WTC11 (cell line): ENCODE measurements at regions of chr3 and their contacts with region 1.

Region 1: DNA sequence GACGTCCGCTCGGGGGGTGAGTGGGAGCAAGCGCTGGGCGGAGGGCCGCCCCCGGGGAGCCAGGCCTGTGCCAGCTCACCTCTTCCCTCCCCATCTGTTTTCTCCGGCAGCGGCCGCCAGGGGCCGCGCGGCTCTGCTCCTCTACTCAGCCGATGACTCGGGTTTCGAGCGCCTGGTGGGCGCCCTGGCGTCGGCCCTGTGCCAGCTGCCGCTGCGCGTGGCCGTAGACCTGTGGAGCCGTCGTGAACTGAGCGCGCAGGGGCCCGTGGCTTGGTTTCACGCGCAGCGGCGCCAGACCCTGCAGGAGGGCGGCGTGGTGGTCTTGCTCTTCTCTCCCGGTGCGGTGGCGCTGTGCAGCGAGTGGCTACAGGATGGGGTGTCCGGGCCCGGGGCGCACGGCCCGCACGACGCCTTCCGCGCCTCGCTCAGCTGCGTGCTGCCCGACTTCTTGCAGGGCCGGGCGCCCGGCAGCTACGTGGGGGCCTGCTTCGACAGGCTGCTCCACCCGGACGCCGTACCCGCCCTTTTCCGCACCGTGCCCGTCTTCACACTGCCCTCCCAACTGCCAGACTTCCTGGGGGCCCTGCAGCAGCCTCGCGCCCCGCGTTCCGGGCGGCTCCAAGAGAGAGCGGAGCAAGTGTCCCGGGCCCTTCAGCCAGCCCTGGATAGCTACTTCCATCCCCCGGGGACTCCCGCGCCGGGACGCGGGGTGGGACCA is 632 bp upstream of the CRELD1 start:
- DNase-seq: peak; percentile 88
- ATAC-seq: peak; percentile 71
- H3K4me3 Mint-ChIP-seq: peak overlapping the region; percentile 93
- H3K27ac Mint-ChIP-seq: peak overlapping the region; percentile 53; the same call in 1 of the 2 replicates
- H3K4me1 Mint-ChIP-seq: peaks cover 14% of the 10 kb centered on the region
- H3K27me3 Mint-ChIP-seq: peaks cover 10% of the 10 kb centered on the region
- CTCF ChIP-seq: peak; percentile 33

Region 2: GRCh38 chr3:9525078-9525477 is 407.9 kb before region 1 on chr3:
- CTCF ChIA-PET with region 1: no interaction called
- POLR2A ChIA-PET with region 1: no interaction called
- DNase-seq: no peak
- ATAC-seq: no peak
- H3K4me3 Mint-ChIP-seq: no peak overlapping the region
- H3K27ac Mint-ChIP-seq: no peak overlapping the region
- H3K4me1 Mint-ChIP-seq: no peaks in the 10 kb centered on the region
- H3K27me3 Mint-ChIP-seq: peaks cover 22% of the 10 kb centered on the region
- CTCF ChIP-seq: no peak

Region 3: DNA sequence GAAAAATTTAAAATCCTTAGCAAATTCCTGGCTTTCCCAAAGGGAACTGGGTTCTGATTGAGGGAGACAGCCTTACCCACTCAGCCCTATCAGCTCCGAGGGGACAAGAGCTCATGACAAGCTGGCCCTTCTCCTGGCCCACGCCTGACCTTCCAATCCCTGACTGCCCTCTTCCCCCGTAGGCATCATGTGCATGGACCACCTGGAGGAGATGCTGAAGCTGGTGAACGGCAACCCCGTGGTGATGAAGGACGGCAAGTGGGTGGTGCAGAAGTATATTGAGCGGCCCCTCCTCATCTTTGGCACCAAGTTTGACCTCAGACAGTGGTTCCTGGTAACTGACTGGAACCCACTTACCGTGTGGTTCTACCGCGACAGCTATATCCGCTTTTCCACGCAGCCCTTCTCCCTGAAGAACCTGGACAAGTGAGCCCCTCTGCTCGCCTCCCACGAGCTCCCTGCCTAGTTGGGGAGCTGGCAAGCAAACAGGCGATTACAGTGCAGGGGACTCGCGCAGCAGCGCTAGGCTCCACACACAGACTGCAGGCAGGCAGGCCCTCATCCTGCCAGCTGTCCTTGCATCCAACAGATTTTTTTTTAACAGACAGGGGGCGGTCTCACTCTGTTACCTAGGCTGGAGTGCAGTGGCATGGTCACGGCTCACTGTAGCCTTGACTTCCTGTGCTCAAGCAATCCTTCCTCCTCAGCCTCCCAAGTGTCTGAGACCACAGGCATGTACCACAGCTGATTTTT is 106.0 kb before region 1 on chr3:
- CTCF ChIA-PET with region 1: interaction called, 16 read pairs
- POLR2A ChIA-PET with region 1: no interaction called
- DNase-seq: peak; percentile 45
- ATAC-seq: peak; percentile 92
- H3K4me3 Mint-ChIP-seq: no peak overlapping the region
- H3K27ac Mint-ChIP-seq: no peak overlapping the region
- H3K4me1 Mint-ChIP-seq: peaks cover 8% of the 10 kb centered on the region
- H3K27me3 Mint-ChIP-seq: no peaks in the 10 kb centered on the region
- CTCF ChIP-seq: peak; percentile 69

Region 4: GRCh38 chr3:9915254-9916141 is 17.5 kb before region 1 on chr3:
- CTCF ChIA-PET with region 1: interaction called, 17 read pairs
- POLR2A ChIA-PET with region 1: interaction called, 16 read pairs
- DNase-seq: peak; percentile 68
- ATAC-seq: peak; percentile 20
- H3K4me3 Mint-ChIP-seq: peak overlapping the region; percentile 73
- H3K27ac Mint-ChIP-seq: no peak overlapping the region
- H3K4me1 Mint-ChIP-seq: peaks cover 18% of the 10 kb centered on the region
- H3K27me3 Mint-ChIP-seq: peaks cover 3% of the 10 kb centered on the region; the same call in 1 of the 2 replicates
- CTCF ChIP-seq: no peak

Region 5: DNA sequence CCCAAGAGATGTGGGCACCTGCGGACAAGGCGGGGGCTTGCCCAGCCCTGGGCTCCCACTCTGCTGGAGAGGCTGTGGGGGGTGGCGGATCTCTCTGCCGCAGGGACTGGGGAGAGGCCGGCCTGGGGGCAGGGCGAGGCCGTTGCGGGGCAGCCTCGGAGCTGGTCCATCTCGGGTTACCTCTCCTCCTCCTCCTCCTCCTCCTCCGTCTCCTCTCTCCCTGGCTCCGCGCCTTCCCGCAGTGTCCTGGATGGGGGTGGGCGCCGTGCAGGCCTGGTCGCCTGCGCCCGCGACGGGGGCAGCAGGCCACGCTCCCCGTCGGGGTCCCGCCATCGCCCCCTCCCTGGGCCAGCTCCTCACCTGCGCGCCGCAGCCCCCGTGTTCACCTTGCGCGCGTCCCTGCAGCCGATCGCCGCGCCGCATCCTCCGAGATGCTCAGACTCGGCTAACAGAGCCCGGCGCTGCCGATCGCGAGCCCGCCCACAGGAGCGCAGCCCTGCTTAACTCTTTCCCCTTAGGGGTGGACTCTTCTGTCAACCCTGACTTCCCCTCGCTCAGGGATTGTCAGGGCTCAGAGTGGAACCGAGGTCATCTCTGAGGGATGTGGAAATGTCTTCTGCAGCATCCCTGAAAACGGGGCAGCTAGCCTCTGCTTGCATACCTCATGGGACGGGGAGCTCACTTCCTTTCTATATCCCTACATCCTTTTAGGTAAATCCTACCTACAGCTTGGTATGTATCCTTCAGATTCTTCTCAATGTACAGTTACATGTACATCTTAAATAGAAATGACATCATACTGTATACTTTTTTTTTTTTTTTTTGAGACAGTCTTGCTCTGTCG is 19.2 kb after region 1 on chr3 and contains the start of gene PRRT3:
- CTCF ChIA-PET with region 1: interaction called, 143 read pairs
- POLR2A ChIA-PET with region 1: interaction called, 35 read pairs
- DNase-seq: peak; percentile 76
- ATAC-seq: peak; percentile 69
- H3K4me3 Mint-ChIP-seq: peak within 1 kb of the TSS; percentile 85
- H3K27ac Mint-ChIP-seq: no peak within 1 kb of the TSS
- H3K4me1 Mint-ChIP-seq: peaks cover 30% of the 10 kb centered on the region
- H3K27me3 Mint-ChIP-seq: peaks cover 26% of the 10 kb centered on the region
- CTCF ChIP-seq: no peak
- total RNA-seq, gene PRRT3: 9.2 to 11.5 TPM (median 11.4 TPM) in 3 replicates